ENCODE measurements at regions of chr3 and their contacts with region 1.

Region 1: GRCh38 chr3:112043603-112044201 is 9.2 kb downstream of the TMPRSS7 start:
- DNase-seq: peak; percentile 69
- H3K4me3 ChIP-seq: peak overlapping the region in 1 of 2 experiments; percentile 54; a peak in 1 of 4 replicates
- H3K27ac ChIP-seq: no peak overlapping the region
- H3K4me1 ChIP-seq: no peaks in the 10 kb centered on the region
- H3K27me3 ChIP-seq: no peaks in the 10 kb centered on the region
- CTCF ChIP-seq: peak; percentile 96
- EP300 ChIP-seq: no peak
- RAD21 ChIP-seq: peak; percentile 89

Region 2: DNA sequence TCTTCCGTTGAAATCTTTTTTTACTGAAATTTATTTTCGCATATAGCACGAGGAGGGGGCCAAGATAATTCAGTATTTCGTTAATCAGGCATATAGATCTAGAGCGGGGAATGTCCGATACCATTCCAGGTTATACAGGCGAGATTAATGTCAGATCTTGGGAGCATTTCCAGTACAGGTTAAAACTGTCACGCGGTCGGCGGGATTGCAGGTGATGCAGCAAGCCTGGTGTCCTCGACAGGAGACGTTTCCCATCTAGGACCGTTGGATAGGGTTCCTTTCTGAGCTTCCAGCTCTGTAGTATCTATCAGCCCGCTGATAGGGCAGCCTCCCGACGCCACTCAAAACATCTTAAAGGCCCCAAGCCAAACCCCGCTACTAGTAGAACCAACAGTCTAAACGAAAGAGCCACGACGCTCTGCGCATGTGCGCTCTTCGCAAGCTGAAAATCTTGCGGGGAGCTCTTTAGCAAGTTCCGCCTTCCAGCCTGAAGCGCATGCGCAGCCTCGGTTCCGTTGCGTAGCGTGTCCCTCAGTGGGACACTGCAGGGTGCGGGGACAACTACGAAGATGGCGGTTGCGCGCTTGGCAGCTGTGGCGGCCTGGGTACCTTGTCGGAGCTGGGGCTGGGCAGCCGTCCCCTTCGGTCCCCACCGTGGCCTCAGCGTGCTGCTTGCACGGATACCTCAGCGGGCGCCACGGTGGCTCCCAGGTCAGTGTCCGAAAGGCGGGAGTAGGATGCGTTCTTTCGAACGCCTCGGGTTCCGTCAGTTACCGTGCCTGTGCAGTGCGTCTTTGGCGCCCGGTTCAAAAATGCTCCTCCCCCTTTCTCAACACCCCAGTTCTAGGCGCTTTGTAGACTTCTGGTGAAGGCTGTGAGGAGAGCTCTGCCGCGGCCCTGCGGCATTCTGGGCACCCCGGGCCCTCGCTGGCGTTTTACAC is 64.9 kb before region 1 on chr3 and contains the start of gene ABHD10:
- CTCF ChIA-PET with region 1: interaction called, 15 read pairs
- POLR2A ChIA-PET with region 1: no interaction called
- DNase-seq: peak; percentile 90
- H3K4me3 ChIP-seq: peak within 1 kb of the TSS; percentile 84 to 92
- H3K27ac ChIP-seq: peak within 1 kb of the TSS; percentile 70 to 92
- H3K4me1 ChIP-seq: peaks cover 8 to 12% of the 10 kb centered on the region in 2 experiments; a peak in 3 of 4 replicates
- H3K27me3 ChIP-seq: no peaks in the 10 kb centered on the region
- CTCF ChIP-seq: no peak
- EP300 ChIP-seq: no peak
- RAD21 ChIP-seq: no peak
- polyA plus RNA-seq, gene ABHD10: 14.8 and 18.3 TPM in 2 replicates

Region 3: DNA sequence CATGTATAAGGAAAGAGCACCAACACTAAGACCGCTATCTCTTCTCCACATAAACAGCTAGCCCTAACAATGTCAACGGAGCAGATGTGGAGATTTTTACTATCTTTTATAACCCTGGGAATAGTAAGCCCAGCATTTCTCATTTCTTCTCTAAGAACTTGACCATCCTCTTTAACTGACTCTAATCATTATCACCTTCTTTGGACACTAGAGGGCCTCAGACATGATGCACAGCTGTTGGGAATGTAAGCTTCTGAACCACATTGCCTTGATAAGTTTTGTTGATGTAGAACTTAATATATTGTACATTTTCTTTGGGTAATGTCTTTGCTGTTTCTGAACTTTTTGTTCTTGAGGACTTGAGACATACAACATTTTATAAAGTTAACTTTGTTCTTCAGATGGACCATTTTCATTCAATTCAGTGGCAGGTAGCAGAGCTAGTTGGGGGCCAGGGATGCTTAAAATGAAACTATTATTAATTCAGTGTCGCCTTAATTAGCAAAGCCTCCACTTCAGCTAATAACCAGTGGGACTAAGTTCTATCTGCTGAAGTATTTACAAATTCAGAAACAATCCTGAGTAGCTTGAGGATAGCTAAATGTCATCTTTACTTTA is 54.5 kb before region 1 on chr3:
- CTCF ChIA-PET with region 1: interaction called, 76 read pairs
- POLR2A ChIA-PET with region 1: no interaction called
- DNase-seq: peak; percentile 57
- H3K4me3 ChIP-seq: peak overlapping the region in 1 of 2 experiments; percentile 5; a peak in 1 of 4 replicates
- H3K27ac ChIP-seq: 0 out of 4 replicates have a peak overlapping the region, but pooled peaks of 1 of the 2 experiments have one; percentile 7
- H3K4me1 ChIP-seq: peaks cover 0 to 5% of the 10 kb centered on the region in 2 experiments; a peak in 1 of 4 replicates
- H3K27me3 ChIP-seq: no peaks in the 10 kb centered on the region
- CTCF ChIP-seq: peak; percentile 86
- EP300 ChIP-seq: no peak
- RAD21 ChIP-seq: peak; percentile 77

Region 4: GRCh38 chr3:111998636-111999483 is 44.8 kb before region 1 on chr3 and contains the start of gene TAGLN3:
- CTCF ChIA-PET with region 1: interaction called, 76 read pairs
- POLR2A ChIA-PET with region 1: no interaction called
- DNase-seq: peak; percentile 70
- H3K4me3 ChIP-seq: peak within 1 kb of the TSS; percentile 61 to 77
- H3K27ac ChIP-seq: peak within 1 kb of the TSS; percentile 29 to 96
- H3K4me1 ChIP-seq: peaks cover 12 to 33% of the 10 kb centered on the region in 2 experiments; a peak in 3 of 4 replicates
- H3K27me3 ChIP-seq: no peaks in the 10 kb centered on the region
- CTCF ChIP-seq: no peak
- EP300 ChIP-seq: no peak
- RAD21 ChIP-seq: no peak
- polyA plus RNA-seq, gene TAGLN3: 19.6 and 24.2 TPM in 2 replicates

Region 5: DNA sequence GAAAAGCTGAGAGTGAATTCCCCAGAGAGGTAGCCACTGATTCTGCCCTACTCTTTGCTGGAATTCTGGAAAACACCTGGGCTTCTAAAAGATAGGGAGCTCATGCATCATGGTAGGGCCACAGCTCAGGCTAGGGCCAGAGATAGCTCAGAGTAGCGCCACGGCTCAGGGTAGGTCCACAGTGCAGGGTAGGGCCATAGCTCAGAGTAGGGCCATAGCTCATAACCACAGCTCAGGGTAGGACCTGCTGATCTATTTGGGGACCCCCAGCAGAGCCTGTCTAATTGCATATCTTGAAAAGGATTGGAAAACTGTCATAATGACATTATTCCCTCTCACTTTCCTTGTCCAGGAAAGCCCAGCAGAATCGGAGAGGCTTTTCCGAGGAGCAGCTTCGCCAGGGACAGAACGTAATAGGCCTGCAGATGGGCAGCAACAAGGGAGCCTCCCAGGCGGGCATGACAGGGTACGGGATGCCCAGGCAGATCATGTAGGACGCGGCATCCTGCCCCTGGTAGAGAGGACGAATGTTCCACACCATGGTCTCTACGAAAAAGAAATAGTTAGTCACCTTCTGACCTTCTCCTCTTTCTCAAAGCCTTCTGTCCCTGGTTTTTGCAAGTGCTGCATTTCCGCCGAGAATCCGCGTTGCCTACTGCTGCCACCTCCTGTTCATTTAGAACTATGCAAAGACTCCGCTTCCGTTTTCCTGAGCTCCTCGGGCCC is 30.5 kb before region 1 on chr3:
- CTCF ChIA-PET with region 1: interaction called, 14 read pairs
- POLR2A ChIA-PET with region 1: no interaction called
- DNase-seq: peak; percentile 48
- H3K4me3 ChIP-seq: no peak overlapping the region
- H3K27ac ChIP-seq: no peak overlapping the region
- H3K4me1 ChIP-seq: peaks cover 3 to 8% of the 10 kb centered on the region in 2 experiments; a peak in 2 of 4 replicates
- H3K27me3 ChIP-seq: no peaks in the 10 kb centered on the region
- CTCF ChIP-seq: peak; percentile 66
- EP300 ChIP-seq: no peak
- RAD21 ChIP-seq: peak; percentile 81

Region 6: DNA sequence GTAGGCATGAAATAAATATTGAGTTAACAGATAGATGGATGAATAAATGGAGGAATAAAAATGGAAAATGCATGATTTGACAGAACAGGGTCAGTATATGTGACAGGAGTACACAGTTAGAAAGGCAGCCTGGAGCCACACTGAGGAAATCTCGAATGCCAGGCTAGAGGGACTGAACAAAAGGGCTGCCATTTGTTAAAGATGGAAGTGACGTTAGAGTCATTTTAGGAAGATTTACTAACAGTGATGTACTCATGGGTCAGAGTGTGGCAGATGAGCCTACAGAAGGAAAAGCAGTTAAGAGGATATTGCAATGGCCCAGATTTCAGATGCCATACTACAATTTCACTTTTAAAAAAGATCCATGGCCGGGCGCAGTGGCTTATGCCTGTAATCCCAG is 16.6 kb before region 1 on chr3:
- CTCF ChIA-PET with region 1: interaction called, 16 read pairs
- POLR2A ChIA-PET with region 1: no interaction called
- DNase-seq: no peak
- H3K4me3 ChIP-seq: no peak overlapping the region
- H3K27ac ChIP-seq: no peak overlapping the region
- H3K4me1 ChIP-seq: no peaks in the 10 kb centered on the region; a peak in 1 of 4 replicates
- H3K27me3 ChIP-seq: no peaks in the 10 kb centered on the region
- CTCF ChIP-seq: no peak
- EP300 ChIP-seq: no peak
- RAD21 ChIP-seq: no peak

Region 7: DNA sequence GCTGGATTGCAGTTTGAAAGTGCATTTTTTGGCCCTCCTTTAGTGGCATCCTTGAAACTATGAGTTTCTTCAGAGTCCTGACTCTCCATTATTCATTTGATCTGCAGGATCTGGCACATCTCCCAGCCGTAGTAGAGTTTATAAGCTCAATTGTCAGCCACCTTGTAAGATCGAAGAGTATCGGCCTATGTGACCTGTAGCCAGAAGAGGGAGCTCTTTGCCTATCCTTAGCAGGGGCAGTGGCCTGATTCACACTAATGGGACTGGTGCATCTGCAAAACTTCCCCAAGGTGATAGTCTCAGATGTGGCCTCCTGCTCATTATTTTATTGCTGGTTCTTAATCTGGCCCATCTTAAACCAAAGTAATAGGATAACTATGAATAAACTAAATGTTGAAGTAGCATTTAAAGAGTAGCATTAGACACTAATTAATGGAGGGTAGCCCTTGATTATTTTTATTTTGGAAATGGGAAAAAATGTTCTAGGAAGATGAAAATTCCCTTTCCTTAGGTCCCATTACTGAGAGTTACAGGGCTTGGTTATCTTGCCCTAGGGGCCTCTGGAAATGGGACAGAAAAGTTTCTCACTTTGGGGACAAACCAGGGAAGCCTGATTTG is 68.2 kb after region 1 on chr3:
- CTCF ChIA-PET with region 1: no interaction called
- POLR2A ChIA-PET with region 1: no interaction called
- DNase-seq: peak; percentile 70
- H3K4me3 ChIP-seq: no peak overlapping the region; a peak in 1 of 4 replicates
- H3K27ac ChIP-seq: no peak overlapping the region
- H3K4me1 ChIP-seq: no peaks in the 10 kb centered on the region; a peak in 1 of 4 replicates
- H3K27me3 ChIP-seq: no peaks in the 10 kb centered on the region
- CTCF ChIP-seq: peak; percentile 72
- EP300 ChIP-seq: no peak
- RAD21 ChIP-seq: peak; percentile 89

Measured in SK-N-SH (cell line).